ENCODE measurements at regions of chrX and their contacts with region 1.

Region 1: GRCh38 chrX:118459494-118459893 is 36.1 kb upstream of the DOCK11 start:
- DNase-seq: peak in 4 of 5 donors; percentile 32 to 39 (median 35)
- H3K4me3 ChIP-seq: no peak overlapping the region
- H3K4me3 Mint-ChIP-seq: no peak overlapping the region
- H3K27ac ChIP-seq: no peak overlapping the region
- H3K27ac Mint-ChIP-seq: peak overlapping the region in 2 of 7 donors; percentile 19 to 57
- H3K4me1 ChIP-seq: no peaks in the 10 kb centered on the region
- H3K4me1 Mint-ChIP-seq: peaks cover 2 to 5% (median 4%) of the 10 kb centered on the region in 4 donors
- H3K27me3 ChIP-seq: no peaks in the 10 kb centered on the region
- H3K27me3 Mint-ChIP-seq: no peaks in the 10 kb centered on the region

Region 2: GRCh38 chrX:118552121-118552900 is 92.8 kb after region 1 on chrX:
- CTCF ChIA-PET with region 1: interaction called, 10 read pairs
- POLR2A ChIA-PET with region 1: no interaction called
- intact Hi-C with region 1: no loop called
- DNase-seq: no peak
- H3K4me3 ChIP-seq: no peak overlapping the region
- H3K4me3 Mint-ChIP-seq: peak overlapping the region in 1 of 8 donors; percentile 4
- H3K27ac ChIP-seq: no peak overlapping the region
- H3K27ac Mint-ChIP-seq: peak overlapping the region in 2 of 7 donors; percentile 24 to 63
- H3K4me1 ChIP-seq: peaks cover 13% of the 10 kb centered on the region
- H3K4me1 Mint-ChIP-seq: peaks cover 10 to 18% (median 12%) of the 10 kb centered on the region in 4 donors
- H3K27me3 ChIP-seq: no peaks in the 10 kb centered on the region
- H3K27me3 Mint-ChIP-seq: no peaks in the 10 kb centered on the region